HEK293 (cell line): ENCODE measurements at regions of chr12 and their contacts with region 1.

Region 1: GRCh38 chr12:109477185-109477962 is at the starts of genes KCTD10 and UBE3B:
- H3K4me3 ChIP-seq: peak within 1 kb of the TSS; percentile 87
- H3K27ac ChIP-seq: peak within 1 kb of the TSS; percentile 90
- H3K4me1 ChIP-seq: peaks cover 5% of the 10 kb centered on the region; the same call in 1 of the 2 replicates
- CTCF ChIP-seq: peak; percentile 60; the same call in 1 of the 2 replicates

Region 2: DNA sequence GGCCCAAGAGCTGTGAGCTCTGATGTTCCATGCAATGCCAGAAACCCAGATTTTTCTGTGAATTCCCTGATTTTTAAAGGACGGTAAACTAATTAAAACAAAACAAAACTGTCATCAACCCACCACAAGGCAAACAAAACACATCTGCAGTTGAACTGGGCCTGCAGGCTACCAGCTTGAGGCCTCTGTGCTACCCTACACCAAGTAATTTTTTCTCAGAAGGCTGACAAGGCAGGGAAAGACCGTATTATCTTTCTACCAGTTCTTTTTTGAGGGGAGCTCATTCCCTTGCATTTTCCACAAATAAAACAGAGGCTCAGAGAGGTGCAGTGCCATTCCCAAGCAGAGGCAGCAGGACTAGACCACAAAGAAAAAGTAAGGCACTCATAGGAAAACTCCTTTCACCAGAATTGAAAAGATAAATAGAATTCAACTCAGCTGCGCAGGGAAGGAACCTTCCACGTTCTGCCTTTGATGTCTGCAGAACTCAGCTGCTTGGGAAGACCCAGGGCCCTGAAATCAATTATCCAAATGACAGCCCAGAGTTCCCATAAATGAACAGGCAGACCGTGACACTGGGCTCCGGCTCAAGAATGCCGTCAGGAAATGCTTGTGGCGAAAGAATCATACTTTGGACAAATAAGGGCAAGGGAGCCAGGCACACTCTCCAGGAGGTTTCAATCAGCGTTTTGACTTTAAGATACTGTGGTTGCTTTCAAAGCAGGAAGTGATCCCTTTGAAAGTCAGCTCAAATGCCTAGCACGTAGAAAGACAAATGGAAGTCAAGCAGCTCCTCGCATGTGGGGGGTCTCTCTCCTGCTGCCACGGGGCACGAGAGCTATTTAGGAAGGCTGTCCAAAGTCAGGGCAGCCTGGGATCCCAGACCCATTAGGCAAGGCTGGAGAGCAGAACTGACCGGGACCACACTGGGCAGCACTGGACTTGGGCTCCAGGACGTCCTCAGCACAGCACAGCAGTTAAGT is 14.4 kb before region 1 on chr12:
- CTCF ChIA-PET with region 1: no interaction called
- POLR2A ChIA-PET with region 1: interaction called, 17 read pairs
- H3K4me3 ChIP-seq: 0 out of 2 replicates have a peak overlapping the region, but pooled peaks have one; percentile 3
- H3K27ac ChIP-seq: peak overlapping the region; percentile 24; the same call in 1 of the 2 replicates
- H3K4me1 ChIP-seq: peaks cover 19% of the 10 kb centered on the region
- CTCF ChIP-seq: no peak